Activated T-helper 1 cell treated with anti-CD3 and anti-CD28 coated beads, Interleukin-12 subunit alpha, Interleukin-12 subunit beta, Interleukin-2, Interleukin-4 antibody, amounts not matched to agents 30 ng/mL and 10 ng/mL and 1 ng/mL, durations not matched to agents 14 hours and 24 hours and 36 hours (primary cell): ENCODE measurements at regions of chr6 and their contacts with region 1.

Region 1: GRCh38 chr6:24883618-24884017 is 52.1 kb downstream of the RIPOR2 start:
- DNase-seq: no peak
- H3K4me3 Mint-ChIP-seq: peak overlapping the region; percentile 66
- H3K27ac Mint-ChIP-seq: peak overlapping the region; percentile 91
- H3K4me1 Mint-ChIP-seq: peaks cover 79% of the 10 kb centered on the region
- H3K27me3 Mint-ChIP-seq: no peaks in the 10 kb centered on the region

Region 2: GRCh38 chr6:24899997-24900325 is 16.3 kb after region 1 on chr6:
- intact Hi-C with region 1: loop called (anchors 1 kb)
- DNase-seq: no peak
- H3K4me3 Mint-ChIP-seq: peak overlapping the region; percentile 74
- H3K27ac Mint-ChIP-seq: peak overlapping the region; percentile 77
- H3K4me1 Mint-ChIP-seq: peaks cover 48% of the 10 kb centered on the region
- H3K27me3 Mint-ChIP-seq: no peaks in the 10 kb centered on the region

Region 3: GRCh38 chr6:24915641-24916040 is 32.0 kb after region 1 on chr6:
- intact Hi-C with region 1: no loop called
- DNase-seq: no peak
- H3K4me3 Mint-ChIP-seq: no peak overlapping the region
- H3K27ac Mint-ChIP-seq: peak overlapping the region; percentile 58
- H3K4me1 Mint-ChIP-seq: peaks cover 86% of the 10 kb centered on the region
- H3K27me3 Mint-ChIP-seq: no peaks in the 10 kb centered on the region

Region 4: GRCh38 chr6:24927985-24928745 is 44.5 kb after region 1 on chr6:
- intact Hi-C with region 1: loop called (anchors 1 kb)
- DNase-seq: no peak
- H3K4me3 Mint-ChIP-seq: peak overlapping the region; percentile 92
- H3K27ac Mint-ChIP-seq: peak overlapping the region; percentile 97
- H3K4me1 Mint-ChIP-seq: peaks cover 90% of the 10 kb centered on the region
- H3K27me3 Mint-ChIP-seq: no peaks in the 10 kb centered on the region